Natural killer cell (primary cell): ENCODE measurements at regions of chr9 and their contacts with region 1.

Region 1: GRCh38 chr9:30661925-30662324 is 1722.5 kb upstream of the ACO1 start:
- DNase-seq: no peak
- ATAC-seq: no peak
- H3K4me3 ChIP-seq: no peak overlapping the region
- H3K4me3 Mint-ChIP-seq: no peak overlapping the region
- H3K27ac ChIP-seq: no peak overlapping the region
- H3K27ac Mint-ChIP-seq: no peak overlapping the region
- H3K4me1 ChIP-seq: no peaks in the 10 kb centered on the region
- H3K4me1 Mint-ChIP-seq: no peaks in the 10 kb centered on the region
- H3K27me3 ChIP-seq: no peaks in the 10 kb centered on the region
- H3K27me3 Mint-ChIP-seq: no peaks in the 10 kb centered on the region
- CTCF ChIP-seq: no peak

Region 2: GRCh38 chr9:30713243-30713642 is 51.3 kb after region 1 on chr9:
- intact Hi-C with region 1: no loop called
- DNase-seq: no peak
- ATAC-seq: no peak
- H3K4me3 ChIP-seq: no peak overlapping the region
- H3K4me3 Mint-ChIP-seq: no peak overlapping the region
- H3K27ac ChIP-seq: no peak overlapping the region
- H3K27ac Mint-ChIP-seq: no peak overlapping the region
- H3K4me1 ChIP-seq: no peaks in the 10 kb centered on the region
- H3K4me1 Mint-ChIP-seq: no peaks in the 10 kb centered on the region
- H3K27me3 ChIP-seq: no peaks in the 10 kb centered on the region
- H3K27me3 Mint-ChIP-seq: no peaks in the 10 kb centered on the region
- CTCF ChIP-seq: no peak

Region 3: GRCh38 chr9:30723656-30724055 is 61.7 kb after region 1 on chr9:
- intact Hi-C with region 1: loop called (anchors 10 kb)
- DNase-seq: no peak
- ATAC-seq: no peak
- H3K4me3 ChIP-seq: no peak overlapping the region
- H3K4me3 Mint-ChIP-seq: no peak overlapping the region
- H3K27ac ChIP-seq: no peak overlapping the region
- H3K27ac Mint-ChIP-seq: no peak overlapping the region
- H3K4me1 ChIP-seq: no peaks in the 10 kb centered on the region
- H3K4me1 Mint-ChIP-seq: no peaks in the 10 kb centered on the region
- H3K27me3 ChIP-seq: no peaks in the 10 kb centered on the region
- H3K27me3 Mint-ChIP-seq: no peaks in the 10 kb centered on the region
- CTCF ChIP-seq: no peak